ENCODE measurements at regions of chr1 and their contacts with region 1.

Region 1: GRCh38 chr1:26472901-26473845 is 933 bp downstream of the HMGN2 start:
- DNase-seq: peak; percentile 92
- H3K4me3 ChIP-seq: peak overlapping the region; percentile 78 to 88 (median 81)
- H3K27ac ChIP-seq: peak overlapping the region; percentile 65
- H3K4me1 ChIP-seq: peaks cover 39% of the 10 kb centered on the region
- H3K27me3 ChIP-seq: no peaks in the 10 kb centered on the region
- CTCF ChIP-seq: no peak

Region 2: DNA sequence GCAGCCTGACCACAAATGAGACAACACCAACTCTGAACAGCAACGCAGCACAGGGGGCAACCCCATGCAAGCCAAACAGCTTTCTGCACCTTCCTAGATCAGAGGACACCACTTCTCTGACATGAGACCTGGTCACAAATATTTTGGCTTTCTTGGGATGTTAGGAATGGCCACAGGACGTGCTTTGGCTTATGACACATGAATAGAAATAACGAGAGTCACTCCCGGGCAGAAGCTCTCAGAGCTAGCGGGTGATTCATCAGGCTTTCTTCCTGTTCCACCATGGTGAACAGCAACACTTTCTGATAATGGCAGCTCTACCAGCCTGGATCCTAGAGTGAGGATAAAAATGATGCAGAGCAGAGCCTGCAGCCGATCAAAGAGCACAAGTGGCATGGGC is 514.7 kb before region 1 on chr1:
- CTCF ChIA-PET with region 1: no interaction called
- dilution Hi-C with region 1: no loop called
- in situ Hi-C with region 1: no loop called
- intact Hi-C with region 1: no loop called
- DNase-seq: peak; percentile 58
- H3K4me3 ChIP-seq: no peak overlapping the region
- H3K27ac ChIP-seq: no peak overlapping the region
- H3K4me1 ChIP-seq: peaks cover 11% of the 10 kb centered on the region
- H3K27me3 ChIP-seq: no peaks in the 10 kb centered on the region
- CTCF ChIP-seq: no peak

Region 3: DNA sequence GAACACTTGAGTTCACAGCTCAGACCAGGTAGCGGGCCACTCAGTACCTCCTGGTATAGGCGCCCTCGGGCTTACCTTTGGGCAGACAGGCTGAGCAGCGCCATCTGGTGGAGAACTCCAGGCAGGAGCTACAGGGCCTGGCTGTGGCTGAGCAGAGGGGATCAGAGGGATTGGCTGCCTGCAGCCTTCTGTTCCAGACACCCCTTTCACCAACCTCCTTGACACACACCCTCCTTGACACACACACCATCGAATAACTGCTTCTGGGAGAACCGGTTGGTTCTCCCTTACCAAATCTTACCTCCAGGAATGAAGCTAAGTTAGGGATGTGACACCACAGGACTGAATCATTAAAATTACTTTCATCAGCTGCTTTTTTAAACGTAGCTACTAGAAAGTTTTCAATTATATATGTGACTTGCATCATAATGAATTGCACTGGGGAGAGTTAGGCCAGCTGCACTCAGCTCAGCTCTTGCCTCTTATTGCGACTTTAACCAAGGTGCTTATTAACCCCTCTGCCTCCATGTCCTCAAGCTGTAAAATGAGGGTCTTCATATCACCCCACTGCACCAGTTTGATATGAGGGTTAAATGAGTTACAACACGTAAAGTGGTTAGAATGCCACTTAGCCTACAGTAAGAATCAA is 55.9 kb before region 1 on chr1:
- CTCF ChIA-PET with region 1: no interaction called
- dilution Hi-C with region 1: loop called (anchors 5 kb)
- in situ Hi-C with region 1: no loop called
- intact Hi-C with region 1: no loop called
- DNase-seq: peak; percentile 66
- H3K4me3 ChIP-seq: no peak overlapping the region
- H3K27ac ChIP-seq: no peak overlapping the region
- H3K4me1 ChIP-seq: no peaks in the 10 kb centered on the region
- H3K27me3 ChIP-seq: peaks cover 21% of the 10 kb centered on the region
- CTCF ChIP-seq: peak; percentile 86 to 96

Region 4: GRCh38 chr1:26483980-26484379 is 10.8 kb after region 1 on chr1:
- CTCF ChIA-PET with region 1: interaction called, 18 read pairs
- dilution Hi-C with region 1: no loop called
- in situ Hi-C with region 1: no loop called
- intact Hi-C with region 1: no loop called
- DNase-seq: no peak
- H3K4me3 ChIP-seq: no peak overlapping the region
- H3K27ac ChIP-seq: no peak overlapping the region
- H3K4me1 ChIP-seq: no peaks in the 10 kb centered on the region
- H3K27me3 ChIP-seq: no peaks in the 10 kb centered on the region
- CTCF ChIP-seq: no peak

Region 5: DNA sequence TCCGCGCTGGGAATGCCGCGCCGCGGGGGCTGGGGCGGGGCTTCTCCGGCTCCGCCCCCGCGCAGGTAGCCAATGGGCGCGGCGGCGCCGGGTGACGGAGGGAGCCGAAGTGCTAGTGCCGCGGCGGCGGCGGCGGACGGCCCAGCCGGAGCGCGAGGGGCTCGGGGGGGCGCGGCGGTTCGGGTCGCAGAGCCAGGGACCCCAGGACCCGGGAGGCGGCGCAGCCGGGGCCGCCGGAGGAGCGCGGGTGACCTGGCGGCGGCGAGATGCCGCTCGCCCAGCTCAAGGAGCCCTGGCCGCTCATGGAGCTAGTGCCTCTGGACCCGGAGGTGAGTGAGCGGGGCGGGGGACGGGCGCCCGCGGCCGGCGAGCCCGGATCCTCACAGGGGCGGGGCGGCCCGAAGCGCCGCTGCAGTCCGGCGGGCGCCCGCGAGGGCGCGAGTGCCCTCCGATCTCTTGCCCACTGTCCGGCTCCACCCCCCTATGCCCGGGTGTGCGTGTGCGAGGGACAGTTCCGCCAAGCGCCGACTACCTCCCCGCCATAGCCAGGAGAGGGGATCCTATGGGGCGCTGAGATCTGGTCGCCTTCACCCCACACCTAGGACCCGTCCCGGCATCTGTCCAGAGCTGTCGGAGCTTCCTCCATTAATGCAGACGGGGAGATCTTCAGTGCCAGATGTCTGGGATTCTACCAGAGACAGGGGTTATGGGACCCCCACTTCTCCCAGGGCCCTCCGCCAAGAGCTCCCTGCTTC is 56.7 kb after region 1 on chr1 and contains the start of gene RPS6KA1:
- CTCF ChIA-PET with region 1: interaction called, 3 read pairs
- dilution Hi-C with region 1: loop called (anchors 5 kb)
- in situ Hi-C with region 1: no loop called
- intact Hi-C with region 1: loop called (anchors 2 kb)
- DNase-seq: peak; percentile 60
- H3K4me3 ChIP-seq: peak within 1 kb of the TSS; percentile 68 to 90 (median 77)
- H3K27ac ChIP-seq: peak within 1 kb of the TSS; percentile 83
- H3K4me1 ChIP-seq: peaks cover 22% of the 10 kb centered on the region
- H3K27me3 ChIP-seq: no peaks in the 10 kb centered on the region
- CTCF ChIP-seq: no peak
- total RNA-seq, gene RPS6KA1: 107 to 142 TPM

Region 6: GRCh38 chr1:26541816-26542711 is 68.9 kb after region 1 on chr1:
- CTCF ChIA-PET with region 1: no interaction called
- dilution Hi-C with region 1: loop called (anchors 5 kb)
- in situ Hi-C with region 1: no loop called
- intact Hi-C with region 1: no loop called
- DNase-seq: peak; percentile 92
- H3K4me3 ChIP-seq: no peak overlapping the region
- H3K27ac ChIP-seq: peak overlapping the region; percentile 49
- H3K4me1 ChIP-seq: peaks cover 60% of the 10 kb centered on the region
- H3K27me3 ChIP-seq: no peaks in the 10 kb centered on the region
- CTCF ChIP-seq: peak; percentile 24 to 31